ENCODE measurements at regions of chr12 and their contacts with region 1.

Region 1: GRCh38 chr12:79737875-79738718 is 47.3 kb upstream of the PAWR start:
- DNase-seq: peak; percentile 60
- H3K4me3 ChIP-seq: no peak overlapping the region
- H3K27ac ChIP-seq: no peak overlapping the region
- H3K4me1 ChIP-seq: peaks cover 7% of the 10 kb centered on the region; the same call in 1 of the 2 replicates
- H3K27me3 ChIP-seq: no peaks in the 10 kb centered on the region

Region 2: DNA sequence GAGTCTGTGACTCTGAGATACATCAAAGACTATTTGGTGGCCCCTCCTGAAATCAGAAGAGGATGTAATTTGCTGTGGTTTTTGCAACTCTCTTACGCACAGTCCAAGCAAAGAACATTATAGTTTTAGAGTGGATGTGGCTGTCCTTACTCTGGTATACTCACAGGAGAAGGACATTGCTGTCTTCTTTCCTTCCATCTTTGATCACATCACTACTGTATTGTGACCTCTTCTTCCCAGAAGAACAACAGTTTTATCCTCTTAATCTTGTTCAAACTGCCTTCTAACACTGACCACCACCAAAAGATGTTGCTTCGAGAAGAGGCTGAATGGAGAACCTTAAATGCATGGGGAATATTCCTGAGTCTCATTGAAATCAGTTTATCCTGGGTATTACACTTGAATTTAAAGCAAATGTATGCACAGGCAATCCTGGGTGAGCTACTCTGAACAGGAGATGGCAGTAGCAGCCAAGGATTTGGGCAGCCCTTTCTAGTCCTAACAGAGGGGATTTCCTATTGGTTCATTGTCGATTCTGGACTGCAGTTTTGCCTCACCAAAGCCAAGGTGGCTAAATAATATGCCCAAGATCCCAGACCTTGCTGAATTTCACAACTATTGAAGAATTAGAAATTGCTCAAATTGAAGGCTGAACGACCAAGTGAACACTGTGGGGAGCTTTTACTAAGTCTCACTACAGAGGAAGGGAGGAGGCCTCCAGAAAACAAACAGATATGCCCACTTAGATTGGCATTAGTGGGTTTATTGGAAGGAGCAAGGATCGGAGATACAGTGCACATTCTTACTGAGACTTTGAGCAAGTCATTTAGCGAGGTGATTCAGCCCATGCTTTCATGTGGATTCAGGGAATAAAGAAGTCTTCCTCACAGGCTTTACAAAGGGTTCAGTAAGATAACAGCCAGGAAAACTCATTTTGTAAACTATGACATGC is 330.1 kb before region 1 on chr12:
- in situ Hi-C with region 1: loop called (anchors 25 kb)
- DNase-seq: peak; percentile 90
- H3K4me3 ChIP-seq: peak overlapping the region; percentile 6; the same call in 1 of the 2 replicates
- H3K27ac ChIP-seq: peak overlapping the region; percentile 58
- H3K4me1 ChIP-seq: peaks cover 49% of the 10 kb centered on the region
- H3K27me3 ChIP-seq: no peaks in the 10 kb centered on the region

Region 3: GRCh38 chr12:79555028-79555930 is 182.8 kb before region 1 on chr12:
- in situ Hi-C with region 1: loop called (anchors 25 kb)
- DNase-seq: peak; percentile 67
- H3K4me3 ChIP-seq: no peak overlapping the region
- H3K27ac ChIP-seq: no peak overlapping the region
- H3K4me1 ChIP-seq: peaks cover 22% of the 10 kb centered on the region
- H3K27me3 ChIP-seq: no peaks in the 10 kb centered on the region

Region 4: GRCh38 chr12:79834712-79835376 is 96.7 kb after region 1 on chr12:
- in situ Hi-C with region 1: no loop called
- DNase-seq: no peak
- H3K4me3 ChIP-seq: no peak overlapping the region
- H3K27ac ChIP-seq: no peak overlapping the region
- H3K4me1 ChIP-seq: peaks cover 13% of the 10 kb centered on the region; the same call in 1 of the 2 replicates
- H3K27me3 ChIP-seq: no peaks in the 10 kb centered on the region

Measured in GM23248 (cell line).